Psoas muscle (tissue), 8 donors: ENCODE measurements at regions of chr16 and their contacts with region 1.

Region 1: DNA sequence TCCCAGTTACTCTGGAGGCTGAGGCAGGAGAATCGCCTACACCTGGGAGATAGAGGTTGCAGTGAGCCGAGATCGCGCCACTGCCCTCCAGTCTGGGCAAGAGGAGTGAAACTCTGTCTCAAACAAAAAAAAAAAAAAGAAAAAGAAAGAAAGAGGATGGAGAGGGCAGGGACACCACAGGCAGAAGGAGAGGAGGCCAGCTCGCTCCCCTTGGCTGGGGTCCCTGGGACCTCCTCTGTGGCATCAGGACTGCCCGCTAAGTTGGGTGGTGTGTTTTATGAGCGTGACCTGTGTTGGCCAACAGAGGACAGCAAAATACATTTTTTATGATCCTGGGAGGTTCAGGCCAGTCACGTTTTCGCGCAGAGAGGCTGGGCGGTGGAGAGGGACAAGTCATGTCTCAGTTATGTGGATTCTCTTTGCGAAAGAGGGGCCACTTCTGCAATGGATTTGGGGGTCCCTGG is 229.6 kb downstream of the MRTFB start:
- DNase-seq: peak; percentile 75 to 85
- ATAC-seq: peak; percentile 71 to 79 (median 74)
- H3K4me3 ChIP-seq: peak overlapping the region; percentile 97
- H3K27ac ChIP-seq: peak overlapping the region; percentile 91
- H3K4me1 ChIP-seq: peaks cover under 1% of the 10 kb centered on the region
- H3K27me3 ChIP-seq: no peaks in the 10 kb centered on the region
- CTCF ChIP-seq: peak; percentile 46

Region 2: DNA sequence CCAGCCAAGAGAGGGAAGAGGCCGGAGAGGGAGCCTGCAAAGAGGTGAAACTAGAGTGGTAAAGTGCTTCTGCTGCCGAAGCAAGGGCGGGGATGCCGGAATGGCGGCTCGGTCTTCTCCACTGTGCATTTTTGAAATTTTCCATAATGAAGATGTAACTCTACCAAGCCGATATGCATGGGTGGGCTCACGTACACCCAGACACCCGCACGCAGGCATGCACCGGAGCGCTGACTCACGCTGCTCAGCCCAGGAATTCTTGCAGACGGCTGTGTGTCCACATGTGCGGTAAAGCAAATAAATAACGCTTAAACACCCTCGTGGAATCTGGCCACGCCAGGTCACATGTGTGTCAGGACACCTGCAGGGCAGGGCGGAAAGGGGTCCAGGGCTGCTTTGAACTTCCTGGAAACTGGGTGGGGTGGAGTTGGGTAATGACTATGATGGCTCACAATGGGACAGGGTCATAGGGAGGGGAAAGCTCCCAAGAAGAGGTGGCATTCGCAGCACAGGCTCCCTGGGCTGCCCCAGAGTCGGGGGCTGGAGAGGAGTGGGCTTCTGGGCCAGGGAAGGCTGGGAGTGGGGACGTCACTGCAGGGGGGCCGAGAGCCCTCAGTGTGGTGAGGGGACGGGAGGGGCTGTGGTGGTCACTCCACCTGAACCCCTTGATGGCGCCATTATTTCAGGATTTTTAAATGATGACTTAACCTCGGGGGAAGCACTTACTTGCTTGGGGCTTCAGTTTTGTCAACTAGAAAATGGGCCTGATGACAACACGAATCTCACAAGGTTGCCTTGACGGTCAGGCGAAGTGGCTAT is 63.9 kb after region 1 on chr16:
- intact Hi-C with region 1: no loop called
- DNase-seq: no peak
- ATAC-seq: peak; percentile 16 to 67 (median 37)
- H3K4me3 ChIP-seq: no peak overlapping the region
- H3K27ac ChIP-seq: peak overlapping the region; percentile 89
- H3K4me1 ChIP-seq: peaks cover 10% of the 10 kb centered on the region
- H3K27me3 ChIP-seq: no peaks in the 10 kb centered on the region
- CTCF ChIP-seq: no peak

Region 3: DNA sequence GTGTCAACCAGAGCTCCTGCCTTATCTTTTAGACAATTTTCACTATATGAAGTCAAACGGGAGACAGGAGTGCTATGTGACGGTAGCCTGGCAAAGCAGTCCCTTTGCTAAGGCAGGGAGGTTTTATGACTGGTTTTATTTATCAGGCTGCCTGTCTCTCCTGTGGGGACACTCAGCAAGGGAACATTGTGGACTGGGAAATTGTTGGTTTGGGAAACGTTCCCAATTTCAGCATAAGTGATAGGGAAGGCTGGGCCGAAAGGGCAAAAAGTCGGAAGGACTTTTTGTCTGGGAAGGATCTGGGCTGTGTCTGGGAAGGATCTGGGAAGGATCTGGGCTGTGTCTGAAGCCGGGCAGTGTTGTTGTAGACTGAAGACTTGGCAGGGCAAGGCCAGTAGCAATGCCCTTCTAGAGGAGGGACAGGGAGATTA is 118.1 kb after region 1 on chr16:
- intact Hi-C with region 1: loop called in 1 of 2 experiments (anchors 10 kb)
- DNase-seq: no peak
- ATAC-seq: peak; percentile 42 to 87 (median 60)
- H3K4me3 ChIP-seq: peak overlapping the region; percentile 18
- H3K27ac ChIP-seq: peak overlapping the region; percentile 71
- H3K4me1 ChIP-seq: peaks cover 17% of the 10 kb centered on the region
- H3K27me3 ChIP-seq: no peaks in the 10 kb centered on the region
- CTCF ChIP-seq: no peak

Region 4: DNA sequence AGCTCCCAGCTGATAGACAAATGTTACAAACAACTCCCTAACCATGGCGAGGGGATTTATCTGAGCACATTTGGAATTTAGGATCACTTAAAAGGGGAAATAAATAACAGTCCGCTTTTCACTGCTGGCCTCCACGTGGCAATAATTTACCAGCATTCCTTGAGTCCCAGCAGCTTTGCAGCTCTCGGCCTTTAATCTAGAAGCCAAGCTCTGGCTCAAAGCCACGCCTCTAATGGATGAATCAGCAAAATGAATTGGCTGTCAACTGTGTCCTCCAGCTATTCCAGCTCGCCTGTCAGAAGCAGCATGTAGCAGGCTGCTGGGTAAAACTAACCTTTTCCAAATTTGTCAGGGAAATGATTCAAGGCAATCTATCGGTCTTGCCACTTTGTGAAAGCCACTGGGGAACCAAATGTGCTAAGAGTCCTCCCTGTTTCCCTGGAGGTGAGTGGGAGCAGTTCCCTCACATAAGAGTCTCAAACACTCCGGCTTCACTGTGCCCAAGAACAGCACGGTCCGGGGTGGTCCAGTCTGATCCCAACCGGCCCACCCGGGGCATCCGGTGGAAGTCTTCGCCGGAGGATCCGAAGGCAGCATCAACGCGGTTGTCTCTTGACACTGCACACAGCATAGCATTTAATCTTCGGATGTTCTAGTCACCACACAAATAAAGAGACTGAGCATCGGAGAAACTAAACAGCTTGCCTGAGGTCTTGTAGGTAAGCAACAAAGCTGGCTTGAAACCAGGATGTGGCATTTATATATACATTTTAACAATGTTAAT is 186.0 kb after region 1 on chr16:
- intact Hi-C with region 1: loop called (anchors 2 to 10 kb)
- DNase-seq: peak; percentile 76 to 86
- ATAC-seq: peak; percentile 73 to 84 (median 80)
- H3K4me3 ChIP-seq: peak overlapping the region; percentile 75
- H3K27ac ChIP-seq: peak overlapping the region; percentile 92
- H3K4me1 ChIP-seq: peaks cover 27% of the 10 kb centered on the region
- H3K27me3 ChIP-seq: no peaks in the 10 kb centered on the region
- CTCF ChIP-seq: no peak

Region 5: DNA sequence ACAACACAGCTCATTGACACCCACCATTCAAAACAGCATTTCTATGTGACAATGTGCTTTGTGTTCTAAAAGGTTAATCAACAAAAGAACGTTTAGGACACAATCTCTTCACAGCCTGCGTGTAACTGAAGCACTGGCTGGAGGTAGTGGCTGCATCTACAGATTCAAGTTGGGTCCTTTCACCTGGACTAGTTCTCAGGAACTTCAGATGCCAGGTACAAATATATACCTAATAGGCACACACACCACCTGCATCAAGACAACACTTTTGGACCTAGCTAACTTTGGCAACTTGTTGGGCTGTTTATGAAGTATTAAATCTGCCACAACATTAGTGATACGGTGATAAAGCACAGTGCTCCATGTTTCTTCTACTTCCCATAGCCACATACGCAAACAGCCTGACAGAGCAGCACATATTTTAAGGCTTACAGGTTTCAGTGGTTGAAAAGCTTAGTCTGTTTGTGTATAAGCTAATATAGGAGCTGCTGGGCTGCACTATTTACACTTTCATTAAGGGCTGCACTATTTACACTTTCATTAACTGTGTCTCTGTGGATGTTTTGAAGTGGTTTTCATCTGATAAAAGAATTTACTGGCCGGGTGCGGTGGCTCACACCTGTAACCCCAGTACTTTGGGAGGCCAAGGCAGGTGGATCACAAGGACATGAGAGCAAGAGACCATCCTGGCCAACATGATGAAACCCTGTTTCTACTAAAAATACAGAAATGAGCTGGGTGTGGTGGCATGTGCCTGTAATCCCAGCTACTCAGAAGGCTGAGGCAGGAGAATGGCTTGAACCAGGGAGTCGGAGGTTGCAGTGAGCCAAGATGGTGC is 196.7 kb after region 1 on chr16:
- intact Hi-C with region 1: loop called (anchors 2 to 10 kb)
- DNase-seq: no peak
- ATAC-seq: peak in 3 of 4 donors; percentile 7 to 40 (median 26)
- H3K4me3 ChIP-seq: peak overlapping the region; percentile 17
- H3K27ac ChIP-seq: peak overlapping the region; percentile 88
- H3K4me1 ChIP-seq: peaks cover 76% of the 10 kb centered on the region
- H3K27me3 ChIP-seq: no peaks in the 10 kb centered on the region
- CTCF ChIP-seq: no peak